ENCODE measurements at regions of chr16 and their contacts with region 1.

Region 1: DNA sequence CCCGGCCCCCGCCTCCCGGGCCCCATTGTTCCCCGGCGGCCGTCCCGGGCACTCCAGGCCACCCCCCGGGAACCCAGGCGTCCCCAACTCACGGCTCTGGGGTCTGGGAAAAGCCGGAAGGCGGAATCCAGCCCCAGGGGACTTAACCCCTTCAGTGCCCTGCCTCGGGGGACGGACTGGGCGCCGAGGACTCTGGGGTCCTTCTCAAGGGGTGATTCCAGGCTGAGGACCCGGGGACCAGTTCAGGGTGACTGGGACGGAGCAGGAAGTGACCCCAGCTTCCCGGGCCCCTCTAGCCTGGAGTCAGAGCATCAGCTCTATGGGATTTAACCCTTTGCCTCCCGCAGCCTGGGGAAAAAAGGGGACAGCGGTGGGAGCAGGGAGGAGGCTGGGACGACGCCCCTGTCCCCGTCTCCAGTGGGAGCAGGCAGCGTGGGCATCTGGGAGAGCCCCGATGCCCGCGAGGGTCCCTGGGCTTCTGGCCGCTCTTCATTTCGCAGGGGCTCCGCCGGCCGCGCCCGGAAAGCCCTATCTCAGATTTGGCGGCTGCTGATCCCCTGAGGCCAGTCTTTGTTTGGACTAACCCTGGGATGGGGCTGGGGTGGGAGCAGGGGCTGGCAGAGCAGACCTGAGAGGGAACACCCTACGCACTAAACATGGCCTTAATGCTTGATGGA is at the start of gene ZNF629:
- DNase-seq: no peak
- H3K4me3 ChIP-seq: peak within 1 kb of the TSS; percentile 77 to 99 (median 98)
- H3K27ac ChIP-seq: peak within 1 kb of the TSS; percentile 91 to 97 (median 94)
- H3K4me1 ChIP-seq: peaks cover 19 to 39% (median 29%) of the 10 kb centered on the region in 4 donors
- H3K27me3 ChIP-seq: no peaks in the 10 kb centered on the region
- CTCF ChIP-seq: no peak
- EP300 ChIP-seq: no peak
- POLR2A ChIP-seq: no peak
- total RNA-seq, gene ZNF629: 10.4 to 17.1 (median 15.4) TPM

Region 2: GRCh38 chr16:30805370-30806169 is 18.5 kb after region 1 on chr16:
- intact Hi-C with region 1: loop called (anchors 2 kb)
- DNase-seq: peak; percentile 95
- H3K4me3 ChIP-seq: peak overlapping the region; percentile 77 to 87 (median 82)
- H3K27ac ChIP-seq: peak overlapping the region; percentile 87 to 95 (median 91)
- H3K4me1 ChIP-seq: peaks cover 10 to 24% (median 21%) of the 10 kb centered on the region in 4 donors
- H3K27me3 ChIP-seq: no peaks in the 10 kb centered on the region
- CTCF ChIP-seq: peak in 1 of 3 experiments; percentile 12
- EP300 ChIP-seq: no peak
- POLR2A ChIP-seq: peak; percentile 88

Region 3: GRCh38 chr16:30820952-30821760 is 34.1 kb after region 1 on chr16:
- intact Hi-C with region 1: no loop called
- DNase-seq: no peak
- H3K4me3 ChIP-seq: no peak overlapping the region
- H3K27ac ChIP-seq: no peak overlapping the region
- H3K4me1 ChIP-seq: no peaks in the 10 kb centered on the region
- H3K27me3 ChIP-seq: no peaks in the 10 kb centered on the region
- CTCF ChIP-seq: no peak
- EP300 ChIP-seq: no peak
- POLR2A ChIP-seq: no peak

Measured in esophagus muscularis mucosa (tissue), 4 donors.